ENCODE measurements at regions of chr12 and their contacts with region 1.

Region 1: GRCh38 chr12:63843721-63844390 is 644 bp upstream of the SRGAP1 start:
- DNase-seq: peak; percentile 69
- H3K4me3 Mint-ChIP-seq: peak overlapping the region; percentile 55
- H3K27ac Mint-ChIP-seq: no peak overlapping the region
- H3K4me1 Mint-ChIP-seq: peaks cover 11% of the 10 kb centered on the region
- H3K27me3 Mint-ChIP-seq: peaks cover 44% of the 10 kb centered on the region

Region 2: GRCh38 chr12:64088431-64089349 is 244.8 kb after region 1 on chr12:
- intact Hi-C with region 1: no loop called
- DNase-seq: no peak
- H3K4me3 Mint-ChIP-seq: no peak overlapping the region
- H3K27ac Mint-ChIP-seq: no peak overlapping the region
- H3K4me1 Mint-ChIP-seq: no peaks in the 10 kb centered on the region
- H3K27me3 Mint-ChIP-seq: peaks cover 2% of the 10 kb centered on the region

Region 3: DNA sequence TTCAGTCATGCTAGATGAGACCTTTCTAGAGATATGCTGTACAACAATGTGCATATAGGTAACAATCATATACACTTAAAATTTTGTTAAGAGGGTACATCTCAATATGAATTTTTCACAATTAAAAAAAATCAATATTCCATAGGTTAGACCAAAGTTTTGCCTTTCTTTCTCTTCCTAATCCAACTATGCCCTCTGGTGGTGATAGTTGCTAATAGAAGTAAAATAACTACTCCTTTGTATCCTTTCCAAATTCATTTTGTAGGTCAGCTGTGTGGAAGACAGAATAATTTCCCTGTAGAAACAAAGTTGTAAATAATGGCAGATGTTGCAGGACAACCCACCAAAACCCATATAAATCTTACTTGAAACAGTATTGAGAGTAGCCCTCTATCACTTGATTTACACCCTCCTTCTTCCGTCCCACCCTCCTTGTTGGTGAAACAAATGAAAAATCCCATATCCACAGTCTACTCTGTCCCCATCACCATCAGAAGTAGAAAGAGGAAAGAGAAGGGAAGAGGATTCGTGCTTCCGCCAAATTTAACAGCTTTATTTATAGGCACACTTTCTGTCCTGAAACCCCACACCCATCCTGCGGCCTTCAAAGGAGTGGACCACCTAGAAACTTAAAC is 412.4 kb after region 1 on chr12:
- intact Hi-C with region 1: loop called (anchors 1 kb)
- DNase-seq: no peak
- H3K4me3 Mint-ChIP-seq: no peak overlapping the region
- H3K27ac Mint-ChIP-seq: no peak overlapping the region
- H3K4me1 Mint-ChIP-seq: no peaks in the 10 kb centered on the region
- H3K27me3 Mint-ChIP-seq: peaks cover 5% of the 10 kb centered on the region